Transverse colon (tissue), 4 donors: ENCODE measurements at regions of chr1 and their contacts with region 1.

Region 1: DNA sequence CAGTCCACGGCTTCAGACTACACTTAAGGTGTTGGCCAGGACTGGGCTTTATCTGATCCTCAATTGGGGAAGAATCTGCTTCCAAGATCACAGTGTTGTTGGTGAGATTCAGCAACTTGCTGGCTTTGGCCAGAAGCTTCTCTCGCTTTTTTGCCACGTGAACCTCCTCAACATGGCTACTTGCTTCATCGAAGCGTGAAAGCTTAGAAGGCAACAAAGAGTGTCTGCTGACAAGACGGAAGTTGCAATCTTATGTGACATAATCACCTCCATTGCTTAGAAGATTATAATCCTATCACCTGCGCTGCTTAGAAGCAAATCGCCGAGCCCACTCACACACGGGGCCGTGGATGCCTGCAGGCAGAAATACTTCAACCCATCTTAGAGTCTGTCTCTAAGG is 10.4 kb upstream of the ITPKB start:
- DNase-seq: no peak
- H3K4me3 ChIP-seq: no peak overlapping the region
- H3K27ac ChIP-seq: no peak overlapping the region
- H3K4me1 ChIP-seq: no peaks in the 10 kb centered on the region
- H3K27me3 ChIP-seq: no peaks in the 10 kb centered on the region
- CTCF ChIP-seq: no peak
- EP300 ChIP-seq: no peak
- POLR2A ChIP-seq: no peak

Region 2: GRCh38 chr1:226584164-226584563 is 165.3 kb before region 1 on chr1:
- in situ Hi-C with region 1: no loop called
- intact Hi-C with region 1: no loop called
- DNase-seq: no peak
- H3K4me3 ChIP-seq: no peak overlapping the region
- H3K27ac ChIP-seq: no peak overlapping the region
- H3K4me1 ChIP-seq: peaks cover 0 to 6% (median 0%) of the 10 kb centered on the region in 4 donors
- H3K27me3 ChIP-seq: no peaks in the 10 kb centered on the region
- CTCF ChIP-seq: no peak
- EP300 ChIP-seq: no peak
- POLR2A ChIP-seq: no peak

Region 3: GRCh38 chr1:226778657-226779058 is 29.2 kb after region 1 on chr1:
- in situ Hi-C with region 1: no loop called
- intact Hi-C with region 1: loop called (anchors 1 kb)
- DNase-seq: peak; percentile 51
- H3K4me3 ChIP-seq: no peak overlapping the region
- H3K27ac ChIP-seq: peak overlapping the region; percentile 49 to 74 (median 66)
- H3K4me1 ChIP-seq: peaks cover 7 to 21% (median 18%) of the 10 kb centered on the region in 4 donors
- H3K27me3 ChIP-seq: no peaks in the 10 kb centered on the region
- CTCF ChIP-seq: no peak
- EP300 ChIP-seq: peak; percentile 8
- POLR2A ChIP-seq: no peak